ENCODE measurements at regions of chr4 and their contacts with region 1.

Region 1: GRCh38 chr4:145481164-145481941 is at the start of gene SMAD1:
- DNase-seq: peak; percentile 86 to 89
- ATAC-seq: peak; percentile 92 to 97 (median 94)
- H3K4me3 ChIP-seq: peak within 1 kb of the TSS; percentile 67 to 96 (median 88)
- H3K27ac ChIP-seq: peak within 1 kb of the TSS; percentile 94 to 99 (median 98)
- H3K4me1 ChIP-seq: peaks cover 0 to 41% (median 28%) of the 10 kb centered on the region in 9 donors
- H3K27me3 ChIP-seq: no peaks in the 10 kb centered on the region
- CTCF ChIP-seq: no peak
- total RNA-seq, gene SMAD1: 9.4 to 19.4 (median 16.2) TPM

Region 2: DNA sequence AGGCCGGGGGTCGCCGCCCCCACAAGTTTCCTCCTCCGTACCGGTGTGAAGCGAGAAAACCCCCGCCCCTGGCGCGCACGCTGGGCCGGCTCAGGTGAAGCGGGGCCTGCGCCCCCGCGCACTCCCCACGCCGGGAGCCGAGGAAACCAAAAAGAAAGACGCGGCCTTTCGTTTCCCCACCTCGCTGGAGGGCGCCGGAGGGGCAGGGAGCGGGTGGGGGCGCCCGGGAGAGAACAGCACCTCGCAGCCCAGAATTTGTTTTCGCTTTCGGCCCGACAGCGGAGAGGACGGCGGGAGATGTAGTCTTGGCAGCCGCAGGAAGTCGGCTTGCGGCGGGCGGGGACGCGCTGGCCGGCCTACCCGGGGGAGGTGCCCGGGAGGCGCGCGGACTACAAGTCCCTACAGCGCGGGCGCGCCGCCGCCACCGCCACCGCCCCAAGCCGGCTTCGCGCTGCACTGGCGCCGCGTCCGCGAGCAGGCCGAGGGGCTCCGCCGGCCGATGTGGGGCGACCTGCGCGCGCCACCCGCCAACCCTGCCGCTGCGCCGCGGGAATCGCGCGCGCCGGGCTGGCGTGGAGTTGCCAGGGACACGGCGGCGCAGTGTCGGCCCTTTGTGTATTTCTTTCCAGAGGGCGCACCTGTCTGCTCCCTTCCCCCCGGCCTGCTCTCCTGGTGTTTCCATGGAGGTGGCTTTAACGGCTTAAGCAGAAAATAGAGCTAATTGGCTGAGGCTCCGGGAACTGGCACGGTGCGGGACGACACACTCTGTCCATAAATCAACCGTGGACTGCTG is 300.9 kb before region 1 on chr4 and contains the start of gene OTUD4:
- intact Hi-C with region 1: loop called in 3 of 10 experiments (anchors 5 to 10 kb)
- DNase-seq: peak; percentile 94 to 96
- ATAC-seq: peak; percentile 96 to 98 (median 97)
- H3K4me3 ChIP-seq: peak within 1 kb of the TSS; percentile 60 to 91 (median 84)
- H3K27ac ChIP-seq: peak within 1 kb of the TSS; percentile 92 to 99 (median 97)
- H3K4me1 ChIP-seq: peaks cover 4 to 45% (median 28%) of the 10 kb centered on the region in 9 donors
- H3K27me3 ChIP-seq: no peaks in the 10 kb centered on the region
- CTCF ChIP-seq: peak in 4 of 9 donors; percentile 27 to 37 (median 32)
- total RNA-seq, gene OTUD4: 22.5 to 36.7 (median 26.9) TPM

Region 3: DNA sequence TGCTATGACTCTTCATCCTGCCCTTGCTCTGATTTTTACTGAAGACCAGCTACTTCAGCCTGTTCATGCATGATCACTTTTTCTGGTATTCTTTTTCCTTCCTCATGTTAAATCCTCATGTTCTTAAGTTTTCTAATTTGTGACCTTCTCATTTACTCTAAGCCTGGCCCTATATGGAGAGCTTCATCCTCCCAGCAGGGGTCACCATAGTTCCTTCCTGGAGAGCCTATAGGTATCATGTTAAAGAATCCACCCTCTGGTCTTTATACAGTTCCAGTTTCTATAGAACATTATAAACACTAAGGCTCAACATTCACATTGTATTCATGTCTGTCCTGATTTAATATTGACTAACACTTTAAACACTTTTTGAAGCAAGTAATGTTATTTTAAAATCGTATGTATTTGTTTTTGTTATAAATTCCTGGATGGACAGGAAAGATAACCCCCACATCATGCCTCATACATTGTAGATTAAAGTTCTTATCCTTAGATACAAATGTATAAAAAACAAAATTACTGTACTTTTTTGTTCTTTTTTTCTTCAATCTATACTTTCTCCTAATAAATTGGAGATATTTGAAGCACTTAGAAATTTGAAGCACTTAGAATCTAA is 247.2 kb before region 1 on chr4:
- intact Hi-C with region 1: loop called in 2 of 10 experiments (anchors 5 to 10 kb)
- DNase-seq: peak in 1 of 2 donors; percentile 34
- ATAC-seq: peak in 7 of 8 donors; percentile 64 to 81 (median 72)
- H3K4me3 ChIP-seq: no peak overlapping the region
- H3K27ac ChIP-seq: no peak overlapping the region
- H3K4me1 ChIP-seq: no peaks in the 10 kb centered on the region
- H3K27me3 ChIP-seq: no peaks in the 10 kb centered on the region
- CTCF ChIP-seq: peak; percentile 63 to 88 (median 81)

Region 4: GRCh38 chr4:145390571-145390970 is 90.8 kb before region 1 on chr4:
- intact Hi-C with region 1: no loop called
- DNase-seq: no peak
- ATAC-seq: no peak
- H3K4me3 ChIP-seq: no peak overlapping the region
- H3K27ac ChIP-seq: no peak overlapping the region
- H3K4me1 ChIP-seq: peaks cover 0 to 10% (median 0%) of the 10 kb centered on the region in 9 donors
- H3K27me3 ChIP-seq: no peaks in the 10 kb centered on the region
- CTCF ChIP-seq: no peak

Region 5: DNA sequence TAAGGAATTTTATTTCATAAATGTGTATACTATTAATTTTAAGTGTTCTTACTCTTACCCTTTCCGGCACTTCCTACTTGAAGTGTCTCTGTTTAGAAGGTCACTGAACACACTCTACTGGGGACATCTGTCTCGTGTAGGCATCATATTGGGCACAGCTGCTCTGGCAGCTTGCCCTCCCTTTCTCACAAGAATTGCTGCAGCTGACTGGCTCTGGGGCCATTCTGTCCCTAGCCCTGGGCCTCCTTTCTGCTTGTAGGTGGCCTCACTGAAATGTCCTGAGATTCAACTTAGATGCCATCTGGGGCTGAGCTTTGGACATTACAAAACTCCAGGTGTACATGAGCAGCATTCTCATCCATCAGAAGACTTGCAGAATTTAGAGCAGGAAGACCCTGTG is 49.9 kb after region 1 on chr4:
- intact Hi-C with region 1: loop called in 1 of 10 experiments (anchors 10 kb)
- DNase-seq: peak; percentile 16 to 33
- ATAC-seq: peak in 7 of 8 donors; percentile 38 to 86 (median 78)
- H3K4me3 ChIP-seq: no peak overlapping the region
- H3K27ac ChIP-seq: peak overlapping the region in 1 of 10 donors; percentile 28
- H3K4me1 ChIP-seq: peaks cover 0 to 58% (median 32%) of the 10 kb centered on the region in 9 donors
- H3K27me3 ChIP-seq: no peaks in the 10 kb centered on the region
- CTCF ChIP-seq: no peak

Region 6: DNA sequence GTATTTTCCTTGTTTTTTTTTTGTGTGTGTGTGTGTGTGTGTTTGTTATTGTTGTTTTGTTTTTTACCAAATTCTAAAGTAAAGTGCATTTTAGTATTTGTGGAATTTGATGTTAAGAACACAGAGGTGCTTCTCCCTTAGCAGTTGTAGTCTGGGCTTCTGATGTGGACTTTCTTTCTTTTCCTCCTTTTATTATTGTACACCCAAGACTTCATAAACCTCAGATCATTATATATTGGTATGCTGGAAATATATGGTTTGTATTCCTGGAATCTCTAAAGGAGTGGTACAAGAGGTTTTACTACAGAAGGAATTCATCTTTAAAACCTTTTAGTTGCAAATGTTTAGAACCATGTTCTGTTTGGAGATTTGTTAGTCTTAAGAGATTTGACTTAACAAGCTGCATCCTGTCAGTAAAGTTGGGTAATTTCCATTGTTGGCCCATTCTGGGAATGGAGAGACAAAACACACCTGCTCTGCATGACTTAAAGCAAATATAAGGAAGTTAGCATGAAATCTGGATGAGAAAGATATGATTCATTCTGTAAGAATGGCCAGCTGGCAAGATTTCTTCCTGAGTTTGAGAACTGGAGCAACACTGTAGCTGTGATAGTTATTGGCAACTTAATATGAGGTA is 64.3 kb after region 1 on chr4:
- intact Hi-C with region 1: loop called in 4 of 10 experiments (anchors 5 to 10 kb)
- DNase-seq: peak in 1 of 2 donors; percentile 34
- ATAC-seq: peak in 7 of 8 donors; percentile 61 to 81 (median 75)
- H3K4me3 ChIP-seq: no peak overlapping the region
- H3K27ac ChIP-seq: peak overlapping the region in 7 of 10 donors; percentile 9 to 63 (median 31)
- H3K4me1 ChIP-seq: peaks cover 0 to 51% (median 24%) of the 10 kb centered on the region in 9 donors
- H3K27me3 ChIP-seq: no peaks in the 10 kb centered on the region
- CTCF ChIP-seq: no peak

Region 7: GRCh38 chr4:145557720-145558119 is 76.4 kb after region 1 on chr4:
- intact Hi-C with region 1: loop called in 5 of 10 experiments (anchors 2 to 10 kb)
- DNase-seq: peak; percentile 18 to 66
- ATAC-seq: peak; percentile 78 to 92 (median 84)
- H3K4me3 ChIP-seq: no peak overlapping the region
- H3K27ac ChIP-seq: no peak overlapping the region
- H3K4me1 ChIP-seq: peaks cover 0 to 3% (median 0%) of the 10 kb centered on the region in 9 donors
- H3K27me3 ChIP-seq: no peaks in the 10 kb centered on the region
- CTCF ChIP-seq: peak; percentile 72 to 95 (median 87)

Region 8: GRCh38 chr4:145589916-145590702 is 108.8 kb after region 1 on chr4:
- intact Hi-C with region 1: no loop called
- DNase-seq: no peak
- ATAC-seq: no peak
- H3K4me3 ChIP-seq: no peak overlapping the region
- H3K27ac ChIP-seq: no peak overlapping the region
- H3K4me1 ChIP-seq: no peaks in the 10 kb centered on the region
- H3K27me3 ChIP-seq: no peaks in the 10 kb centered on the region
- CTCF ChIP-seq: no peak

Measured in heart right ventricle (tissue), 16 donors.